ENCODE measurements at regions of chr4 and their contacts with region 1.

Region 1: DNA sequence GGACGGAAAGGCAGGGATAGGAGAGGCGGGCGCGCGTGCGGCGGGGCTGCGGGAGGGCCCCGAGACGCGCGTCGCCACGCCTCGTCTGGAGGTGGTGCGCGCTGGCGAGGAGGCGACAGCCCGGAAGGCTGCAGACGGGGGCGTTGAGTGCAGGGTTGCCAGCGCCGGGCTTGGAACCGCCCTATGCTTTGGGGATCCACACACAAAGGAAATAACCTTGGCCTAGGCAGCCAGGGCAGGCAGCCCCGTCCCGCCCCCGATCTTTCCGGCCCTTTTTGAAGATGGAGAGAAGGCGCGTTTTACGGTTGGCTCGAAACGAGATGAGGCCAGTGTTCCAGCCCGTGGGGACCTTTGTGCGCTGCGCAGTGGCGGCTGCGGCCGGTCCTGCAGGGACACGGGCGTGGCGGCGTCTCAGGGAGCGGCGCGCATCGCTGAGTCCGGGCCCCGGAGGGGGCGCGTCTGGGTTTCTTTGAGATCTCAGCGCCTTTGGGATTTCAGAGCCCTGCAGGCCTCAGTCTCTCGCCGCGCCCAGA is 50.8 kb upstream of the TRIM2 start:
- DNase-seq: peak; percentile 63
- ATAC-seq: peak; percentile 76
- H3K4me3 Mint-ChIP-seq: peak overlapping the region; percentile 87
- H3K27ac Mint-ChIP-seq: peak overlapping the region; percentile 85
- H3K4me1 Mint-ChIP-seq: peaks cover 35% of the 10 kb centered on the region
- H3K27me3 Mint-ChIP-seq: peaks cover 30% of the 10 kb centered on the region
- CTCF ChIP-seq: no peak

Region 2: DNA sequence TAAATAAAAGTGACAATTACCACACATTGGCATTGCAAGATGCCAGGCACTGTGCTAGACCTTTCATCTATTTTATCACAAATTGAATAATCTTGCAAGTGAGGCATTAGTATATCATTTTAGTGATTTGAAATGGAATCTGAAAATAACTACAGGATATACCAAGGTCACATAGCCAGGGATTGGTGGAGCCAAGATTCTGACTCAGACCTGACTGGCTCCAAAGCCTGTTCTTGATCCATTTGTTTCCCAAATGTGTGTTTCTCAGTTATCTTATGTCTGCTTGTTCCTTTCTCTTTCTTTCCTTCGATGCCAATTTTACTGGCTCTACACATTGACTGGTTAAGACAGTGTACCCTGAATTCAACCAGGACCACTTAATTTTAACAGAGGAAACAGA is 1116.8 kb before region 1 on chr4:
- CTCF ChIA-PET with region 1: no interaction called
- POLR2A ChIA-PET with region 1: interaction called, 11 read pairs
- intact Hi-C with region 1: no loop called
- DNase-seq: no peak
- ATAC-seq: no peak
- H3K4me3 Mint-ChIP-seq: no peak overlapping the region
- H3K27ac Mint-ChIP-seq: no peak overlapping the region
- H3K4me1 Mint-ChIP-seq: no peaks in the 10 kb centered on the region
- H3K27me3 Mint-ChIP-seq: no peaks in the 10 kb centered on the region
- CTCF ChIP-seq: no peak

Region 3: DNA sequence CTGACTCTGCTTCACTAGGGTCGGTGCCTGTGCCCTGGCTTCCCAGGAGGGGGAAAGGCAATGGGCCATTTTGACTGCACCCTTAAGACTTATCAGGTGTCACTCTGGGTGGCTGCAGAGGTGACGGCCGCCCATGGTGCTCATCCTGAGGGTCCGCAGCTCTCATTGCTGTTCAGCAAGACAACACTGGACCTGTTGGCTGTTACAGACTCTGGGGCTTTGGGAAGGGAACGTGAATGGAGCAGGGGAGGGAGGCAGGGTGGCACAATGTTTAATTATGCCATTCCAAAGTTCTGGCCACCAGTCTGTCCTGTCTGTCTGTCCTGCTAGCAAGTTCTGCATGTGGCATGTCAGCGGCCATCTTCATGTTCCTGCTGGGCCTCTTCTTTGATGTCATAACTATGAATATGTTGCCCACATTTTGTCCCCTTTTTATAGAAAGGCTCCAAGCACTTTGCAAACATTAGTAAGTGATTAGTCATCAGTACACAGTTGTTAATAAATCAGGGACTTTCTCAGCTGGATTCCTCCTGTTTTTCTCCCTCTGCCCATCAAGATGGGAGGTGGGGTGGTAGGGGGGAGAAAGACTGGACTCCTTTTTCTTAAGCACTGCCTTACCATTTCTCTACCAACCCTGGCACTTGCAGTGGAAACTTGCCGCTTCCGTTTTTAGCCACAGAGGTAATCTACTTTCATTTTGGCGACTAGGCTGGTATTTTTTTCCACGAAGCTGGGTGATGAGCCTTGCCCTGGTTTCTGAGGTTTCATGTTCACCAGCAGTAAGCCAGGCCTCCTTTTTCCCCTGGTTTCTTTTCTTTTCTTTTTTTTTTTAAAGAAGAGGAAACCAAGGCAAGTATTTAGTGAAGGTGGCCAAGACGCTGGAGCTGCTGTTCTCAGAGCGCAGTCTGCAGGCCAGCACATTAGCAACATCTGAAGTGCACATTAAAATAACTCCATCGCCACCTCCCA is 37.8 kb before region 1 on chr4:
- CTCF ChIA-PET with region 1: no interaction called
- POLR2A ChIA-PET with region 1: no interaction called
- intact Hi-C with region 1: loop called (anchors 2 kb)
- DNase-seq: peak; percentile 31
- ATAC-seq: peak; percentile 84
- H3K4me3 Mint-ChIP-seq: peak overlapping the region; percentile 65
- H3K27ac Mint-ChIP-seq: no peak overlapping the region
- H3K4me1 Mint-ChIP-seq: peaks cover 3% of the 10 kb centered on the region
- H3K27me3 Mint-ChIP-seq: no peaks in the 10 kb centered on the region
- CTCF ChIP-seq: no peak

Region 4: GRCh38 chr4:153137159-153137558 is 16.2 kb before region 1 on chr4:
- CTCF ChIA-PET with region 1: no interaction called
- POLR2A ChIA-PET with region 1: interaction called, 16 read pairs
- intact Hi-C with region 1: loop called (anchors 2 kb)
- DNase-seq: no peak
- ATAC-seq: no peak
- H3K4me3 Mint-ChIP-seq: no peak overlapping the region
- H3K27ac Mint-ChIP-seq: no peak overlapping the region
- H3K4me1 Mint-ChIP-seq: peaks cover 31% of the 10 kb centered on the region
- H3K27me3 Mint-ChIP-seq: peaks cover 28% of the 10 kb centered on the region
- CTCF ChIP-seq: no peak